Activated T-helper 2 cell treated with anti-CD3 and anti-CD28 coated beads, Interferon-gamma antibody, Interleukin-2, Interleukin-4, amounts not matched to agents 10 μg/mL and 5 μg/mL and 100 μg/mL, durations not matched to agents 14 hours and 24 hours and 36 hours (primary cell): ENCODE measurements at regions of chr17 and their contacts with region 1.

Region 1: DNA sequence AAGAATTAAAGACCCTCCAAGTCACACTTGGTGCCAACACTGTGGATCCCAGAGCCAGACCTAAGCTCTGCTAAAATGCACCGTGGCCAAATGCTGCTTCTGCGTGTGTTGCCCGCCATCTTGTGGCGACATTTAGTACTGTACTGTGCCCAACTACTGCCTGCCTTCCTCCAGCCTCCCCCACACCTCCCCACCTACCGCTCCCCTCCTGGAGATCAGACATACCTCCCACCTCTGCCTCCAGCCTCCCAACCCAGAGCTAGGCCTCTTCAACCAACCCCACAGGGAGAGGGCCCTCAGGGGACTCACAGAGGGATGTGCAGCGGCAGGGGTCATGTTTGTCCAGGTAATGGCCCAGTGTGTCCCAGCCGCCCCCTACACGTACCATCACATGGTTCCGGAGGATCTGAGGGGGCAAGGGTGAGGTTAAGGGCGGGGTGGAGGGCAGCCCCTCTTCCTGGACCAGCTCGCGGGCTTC is 5.5 kb downstream of the GAS2L2 start:
- DNase-seq: peak; percentile 65
- H3K4me3 Mint-ChIP-seq: no peak overlapping the region
- H3K27ac Mint-ChIP-seq: no peak overlapping the region
- H3K4me1 Mint-ChIP-seq: peaks cover 13% of the 10 kb centered on the region
- H3K27me3 Mint-ChIP-seq: peaks cover 34% of the 10 kb centered on the region

Region 2: DNA sequence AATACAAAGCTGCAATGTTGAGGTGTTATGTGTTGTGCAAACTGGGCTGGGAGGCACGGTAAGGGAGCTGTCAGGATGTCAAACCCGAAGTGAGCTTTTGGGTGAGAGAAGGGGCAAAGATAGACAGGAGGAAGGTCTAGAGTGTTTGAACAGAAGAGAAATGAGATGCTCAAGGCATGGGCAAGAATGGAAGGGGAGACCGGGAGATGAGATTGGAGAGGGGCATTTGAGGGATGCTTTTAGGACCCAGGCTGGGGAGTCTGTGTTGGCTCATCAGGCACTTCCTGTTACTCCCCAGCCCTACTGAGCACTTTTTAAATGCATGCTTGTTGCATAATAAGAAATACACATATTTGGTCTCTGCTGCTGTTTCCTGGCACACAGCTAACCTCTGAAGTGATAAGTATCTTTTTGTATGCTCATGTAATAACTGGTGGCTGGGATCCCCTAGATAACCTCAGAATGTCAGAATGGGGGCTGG is 586.3 kb before region 1 on chr17:
- intact Hi-C with region 1: loop called (anchors 10 kb)
- DNase-seq: peak; percentile 18
- H3K4me3 Mint-ChIP-seq: peak overlapping the region; percentile 10
- H3K27ac Mint-ChIP-seq: peak overlapping the region; percentile 13
- H3K4me1 Mint-ChIP-seq: peaks cover 26% of the 10 kb centered on the region
- H3K27me3 Mint-ChIP-seq: no peaks in the 10 kb centered on the region

Region 3: DNA sequence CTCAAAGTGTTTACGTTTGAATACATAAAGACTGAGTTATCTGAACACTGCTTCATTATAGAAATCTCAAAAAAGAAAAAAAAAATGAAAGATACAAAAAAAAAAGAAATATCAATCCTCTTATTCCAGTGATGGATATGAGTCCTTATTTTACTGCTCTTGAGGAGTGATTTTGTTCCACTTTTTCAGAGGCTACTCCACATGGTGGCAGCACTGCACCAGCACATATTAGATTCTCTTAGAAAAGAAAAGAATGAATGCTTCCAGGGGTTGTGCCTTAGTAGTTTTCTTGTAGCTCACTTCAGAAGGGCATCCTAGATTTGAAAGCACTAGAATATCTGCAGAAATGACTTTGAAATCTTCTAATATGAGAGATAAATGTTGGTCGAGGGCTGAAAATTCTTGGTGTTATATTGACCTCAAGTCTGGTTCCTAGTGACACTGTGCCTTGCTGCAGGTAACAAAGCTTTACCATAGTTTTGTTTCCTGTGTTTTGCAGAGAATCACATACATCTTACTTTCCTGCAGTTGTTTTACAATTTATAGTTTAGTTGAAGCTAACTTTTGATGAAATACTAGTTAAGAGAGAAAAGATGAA is 134.6 kb before region 1 on chr17:
- intact Hi-C with region 1: loop called (anchors 1 kb)
- DNase-seq: no peak
- H3K4me3 Mint-ChIP-seq: no peak overlapping the region
- H3K27ac Mint-ChIP-seq: no peak overlapping the region
- H3K4me1 Mint-ChIP-seq: peaks cover 5% of the 10 kb centered on the region
- H3K27me3 Mint-ChIP-seq: no peaks in the 10 kb centered on the region